Colonic mucosa (tissue), 4 donors: ENCODE measurements at regions of chr20 and their contacts with region 1.

Region 1: GRCh38 chr20:51966291-51966971 is 164.1 kb upstream of the SALL4 start:
- DNase-seq: peak; percentile 61
- H3K4me3 ChIP-seq: no peak overlapping the region
- H3K27ac ChIP-seq: no peak overlapping the region
- H3K4me1 ChIP-seq: no peaks in the 10 kb centered on the region
- H3K27me3 ChIP-seq: no peaks in the 10 kb centered on the region
- CTCF ChIP-seq: peak; percentile 48

Region 2: GRCh38 chr20:51643390-51643789 is 323.0 kb before region 1 on chr20:
- intact Hi-C with region 1: loop called (anchors 10 kb)
- DNase-seq: no peak
- H3K4me3 ChIP-seq: no peak overlapping the region
- H3K27ac ChIP-seq: no peak overlapping the region
- H3K4me1 ChIP-seq: no peaks in the 10 kb centered on the region
- H3K27me3 ChIP-seq: no peaks in the 10 kb centered on the region
- CTCF ChIP-seq: no peak

Region 3: GRCh38 chr20:51695574-51696303 is 270.7 kb before region 1 on chr20:
- intact Hi-C with region 1: loop called (anchors 10 kb)
- DNase-seq: no peak
- H3K4me3 ChIP-seq: no peak overlapping the region
- H3K27ac ChIP-seq: peak overlapping the region; percentile 17
- H3K4me1 ChIP-seq: no peaks in the 10 kb centered on the region
- H3K27me3 ChIP-seq: no peaks in the 10 kb centered on the region
- CTCF ChIP-seq: no peak

Region 4: DNA sequence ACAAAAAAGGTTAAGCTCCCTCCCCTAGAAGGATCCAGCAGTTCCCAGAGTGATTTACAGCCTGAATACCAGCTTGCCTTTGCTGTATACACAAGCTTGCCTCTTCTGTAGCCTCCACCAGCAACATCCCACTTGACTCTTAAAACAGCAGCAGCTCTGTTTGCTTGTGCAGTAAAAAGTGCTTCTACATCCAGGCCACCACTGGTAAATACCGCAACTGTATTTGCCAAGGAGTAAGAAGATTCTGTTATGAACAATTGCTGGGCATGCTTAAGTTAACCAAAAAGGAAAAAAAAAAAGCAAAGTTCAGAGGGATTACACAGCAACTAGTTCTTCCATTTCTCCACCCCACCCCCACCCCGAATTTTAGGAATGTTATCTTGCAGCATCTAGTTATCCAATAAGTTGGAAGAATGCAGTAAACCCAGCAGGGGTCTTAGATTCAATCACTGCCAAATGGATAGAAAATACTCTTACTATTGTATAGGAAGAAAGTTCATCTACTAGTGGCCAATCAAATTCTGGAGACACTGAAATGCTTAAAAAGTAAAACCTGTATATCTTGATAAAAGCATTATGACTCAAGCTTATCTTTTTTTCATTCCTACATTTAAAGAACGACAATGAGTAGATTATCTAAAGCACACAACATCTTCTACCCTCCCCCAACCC is 168.9 kb before region 1 on chr20:
- intact Hi-C with region 1: loop called (anchors 5 kb)
- DNase-seq: no peak
- H3K4me3 ChIP-seq: no peak overlapping the region
- H3K27ac ChIP-seq: no peak overlapping the region
- H3K4me1 ChIP-seq: peaks cover 6% of the 10 kb centered on the region
- H3K27me3 ChIP-seq: peaks cover 26% of the 10 kb centered on the region
- CTCF ChIP-seq: no peak